ENCODE measurements at regions of chr5 and their contacts with region 1.

Region 1: DNA sequence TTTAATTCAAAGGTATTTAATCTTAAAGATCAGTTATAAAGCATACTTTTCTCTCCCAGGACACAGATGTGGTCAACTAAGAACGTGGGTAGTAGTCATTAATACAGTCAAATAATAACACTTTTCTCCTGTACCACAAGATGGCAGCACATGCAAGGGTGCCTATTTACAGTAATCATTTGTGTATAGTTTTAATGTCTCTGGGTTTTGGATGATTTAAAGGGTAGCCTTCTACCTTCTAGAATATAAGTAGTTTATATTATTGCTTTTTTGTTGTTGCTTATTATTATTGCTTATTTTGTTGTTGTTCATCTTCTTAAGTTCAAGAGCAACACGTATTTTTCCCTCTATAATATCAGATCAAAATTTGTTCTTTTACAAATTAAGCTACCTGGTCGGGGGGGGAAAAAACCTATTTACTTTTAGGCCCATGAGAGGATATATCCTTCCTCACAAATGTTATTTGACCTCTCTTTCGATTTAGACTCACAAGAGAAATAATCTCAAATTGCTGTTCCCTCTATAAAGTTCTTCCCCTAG is 59.6 kb upstream of the SLC27A6 start:
- DNase-seq: peak in 9 of 14 experiments; percentile 4 to 69 (median 20)
- ATAC-seq: peak; percentile 48
- H3K4me3 ChIP-seq: no peak overlapping the region
- H3K4me3 Mint-ChIP-seq: no peak overlapping the region
- H3K27ac ChIP-seq: no peak overlapping the region
- H3K27ac Mint-ChIP-seq: no peak overlapping the region
- H3K4me1 ChIP-seq: no peaks in the 10 kb centered on the region
- H3K4me1 Mint-ChIP-seq: no peaks in the 10 kb centered on the region
- H3K27me3 ChIP-seq: no peaks in the 10 kb centered on the region
- H3K27me3 Mint-ChIP-seq: peaks cover 1% of the 10 kb centered on the region
- CTCF ChIP-seq: peak; percentile 79

Region 2: DNA sequence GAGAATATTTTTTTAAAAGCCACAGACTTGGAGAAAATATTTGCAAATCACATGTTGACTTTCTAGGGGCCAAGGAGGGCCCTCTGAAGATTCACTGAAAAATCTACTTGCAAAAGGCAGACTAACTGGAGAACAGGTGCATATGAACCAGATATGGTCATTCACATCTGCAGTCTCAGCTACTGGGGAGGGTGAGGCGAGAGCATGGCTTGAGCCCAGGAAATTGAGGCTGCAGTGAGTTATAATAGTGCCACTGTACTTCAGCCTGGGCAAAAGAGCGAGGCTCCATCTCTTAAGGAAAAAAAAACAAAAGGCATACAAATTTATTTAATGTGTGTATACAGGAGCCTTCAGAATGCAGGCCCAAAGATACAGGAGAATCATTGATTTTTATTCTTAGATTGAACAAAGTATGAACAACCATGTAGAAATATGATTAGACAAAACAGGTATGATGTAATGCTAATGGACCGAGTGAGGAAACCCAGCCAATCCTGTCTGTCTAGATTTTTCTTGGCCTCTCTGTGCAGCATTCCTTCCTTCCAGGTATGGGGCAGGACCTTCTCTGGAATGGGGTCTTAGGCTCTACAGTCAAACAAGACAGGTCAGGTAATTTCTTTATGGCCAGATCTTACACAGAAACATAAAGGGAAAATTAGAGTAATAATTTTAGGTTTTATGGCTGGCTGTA is 44.4 kb after region 1 on chr5:
- CTCF ChIA-PET with region 1: no interaction called
- POLR2A ChIA-PET with region 1: no interaction called
- intact Hi-C with region 1: no loop called
- DNase-seq: no peak
- ATAC-seq: no peak
- H3K4me3 ChIP-seq: no peak overlapping the region
- H3K4me3 Mint-ChIP-seq: no peak overlapping the region
- H3K27ac ChIP-seq: no peak overlapping the region
- H3K27ac Mint-ChIP-seq: no peak overlapping the region
- H3K4me1 ChIP-seq: no peaks in the 10 kb centered on the region
- H3K4me1 Mint-ChIP-seq: no peaks in the 10 kb centered on the region
- H3K27me3 ChIP-seq: no peaks in the 10 kb centered on the region
- H3K27me3 Mint-ChIP-seq: peaks cover 2% of the 10 kb centered on the region
- CTCF ChIP-seq: no peak

Region 3: DNA sequence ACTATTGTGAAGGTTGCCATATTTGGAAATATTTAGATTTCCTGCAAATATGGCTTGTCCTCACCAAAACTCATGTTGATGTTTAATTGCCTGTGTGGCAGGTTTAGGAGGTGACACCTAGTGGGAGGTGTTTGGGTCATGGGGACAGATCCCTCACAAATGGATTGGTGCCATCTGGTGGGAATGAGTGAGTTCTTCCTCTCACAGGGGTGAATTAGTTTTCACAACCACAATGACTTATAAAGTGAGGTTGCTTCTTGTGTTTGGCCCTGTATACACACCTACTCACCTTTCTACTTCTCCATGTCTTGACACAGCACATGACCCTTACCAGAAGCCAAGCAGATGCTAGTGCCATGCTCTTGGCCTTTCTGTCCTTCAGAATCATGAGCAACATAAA is 230.0 kb after region 1 on chr5:
- CTCF ChIA-PET with region 1: no interaction called
- POLR2A ChIA-PET with region 1: no interaction called
- intact Hi-C with region 1: loop called (anchors 2 kb)
- DNase-seq: peak in 4 of 14 experiments; percentile 8 to 46 (median 36)
- ATAC-seq: no peak
- H3K4me3 ChIP-seq: no peak overlapping the region
- H3K4me3 Mint-ChIP-seq: no peak overlapping the region
- H3K27ac ChIP-seq: no peak overlapping the region
- H3K27ac Mint-ChIP-seq: no peak overlapping the region
- H3K4me1 ChIP-seq: no peaks in the 10 kb centered on the region
- H3K4me1 Mint-ChIP-seq: no peaks in the 10 kb centered on the region
- H3K27me3 ChIP-seq: no peaks in the 10 kb centered on the region
- H3K27me3 Mint-ChIP-seq: no peaks in the 10 kb centered on the region
- CTCF ChIP-seq: no peak

Region 4: DNA sequence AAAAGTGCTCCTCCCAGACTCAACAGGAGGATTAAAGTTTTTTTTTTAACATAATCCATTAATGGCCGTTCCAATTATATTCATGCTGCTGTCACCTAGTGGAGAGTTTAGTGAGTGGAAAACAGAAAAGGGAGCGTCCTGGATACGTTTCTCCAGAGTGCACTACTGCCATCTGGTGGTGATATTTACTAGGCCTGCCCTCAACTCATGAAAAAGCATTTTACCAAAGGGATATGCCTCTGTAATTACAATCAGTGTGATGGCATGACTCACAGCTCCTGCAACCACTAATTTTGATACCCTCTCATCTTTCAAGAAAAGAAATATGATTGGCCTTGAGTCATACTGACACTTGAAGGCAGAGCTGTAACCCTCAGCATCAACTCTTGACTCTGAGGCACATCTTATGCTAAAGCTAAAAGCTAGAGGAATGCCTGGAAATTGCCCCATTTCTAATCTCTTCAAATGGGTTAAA is 862.3 kb after region 1 on chr5:
- CTCF ChIA-PET with region 1: no interaction called
- POLR2A ChIA-PET with region 1: no interaction called
- intact Hi-C with region 1: loop called in 1 of 2 experiments (anchors 2 kb)
- DNase-seq: peak; percentile 1 to 79 (median 26)
- ATAC-seq: peak; percentile 82
- H3K4me3 ChIP-seq: no peak overlapping the region
- H3K4me3 Mint-ChIP-seq: no peak overlapping the region
- H3K27ac ChIP-seq: no peak overlapping the region
- H3K27ac Mint-ChIP-seq: no peak overlapping the region
- H3K4me1 ChIP-seq: peaks cover 2% of the 10 kb centered on the region
- H3K4me1 Mint-ChIP-seq: no peaks in the 10 kb centered on the region
- H3K27me3 ChIP-seq: no peaks in the 10 kb centered on the region
- H3K27me3 Mint-ChIP-seq: peaks cover 4% of the 10 kb centered on the region
- CTCF ChIP-seq: peak; percentile 94

Region 5: GRCh38 chr5:129852747-129853352 is 947.2 kb after region 1 on chr5:
- CTCF ChIA-PET with region 1: interaction called, 4 read pairs
- POLR2A ChIA-PET with region 1: no interaction called
- intact Hi-C with region 1: loop called in 1 of 2 experiments (anchors 2 kb)
- DNase-seq: peak; percentile 38 to 71 (median 54)
- ATAC-seq: no peak
- H3K4me3 ChIP-seq: no peak overlapping the region
- H3K4me3 Mint-ChIP-seq: no peak overlapping the region
- H3K27ac ChIP-seq: no peak overlapping the region
- H3K27ac Mint-ChIP-seq: no peak overlapping the region
- H3K4me1 ChIP-seq: no peaks in the 10 kb centered on the region
- H3K4me1 Mint-ChIP-seq: no peaks in the 10 kb centered on the region
- H3K27me3 ChIP-seq: no peaks in the 10 kb centered on the region
- H3K27me3 Mint-ChIP-seq: peaks cover 31% of the 10 kb centered on the region
- CTCF ChIP-seq: peak; percentile 98

Measured in CD4-positive, alpha-beta T cell (primary cell).